ENCODE measurements at regions of chr2 and their contacts with region 1.

Region 1: DNA sequence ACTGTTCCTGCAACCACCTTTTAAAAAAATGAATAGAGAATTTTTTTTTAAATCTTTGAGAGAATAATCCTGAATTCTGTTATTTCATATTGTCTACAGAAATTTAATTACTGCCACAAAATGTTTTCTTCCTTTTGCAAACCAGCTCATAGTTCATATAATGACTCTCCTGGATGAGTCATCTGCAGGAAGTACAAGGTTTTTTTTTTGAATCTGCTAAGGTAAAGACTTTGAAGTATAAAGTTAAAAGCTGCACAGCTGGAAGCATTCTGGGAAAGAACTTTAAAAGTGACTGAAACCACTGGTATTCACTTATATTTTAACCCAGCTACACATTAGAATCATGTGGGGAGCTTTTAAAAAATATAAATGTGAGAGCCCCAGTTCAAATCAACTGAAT is 25.4 kb downstream of the SESTD1 start:
- DNase-seq: peak in 7 of 9 donors; percentile 0 to 32 (median 22)
- ATAC-seq: peak; percentile 48
- H3K4me3 ChIP-seq: no peak overlapping the region
- H3K4me3 Mint-ChIP-seq: peak overlapping the region in 3 of 10 donors; percentile 10 to 39 (median 18)
- H3K27ac ChIP-seq: no peak overlapping the region
- H3K27ac Mint-ChIP-seq: peak overlapping the region in 2 of 9 donors; percentile 35 to 73
- H3K4me1 ChIP-seq: peaks cover 0 to 4% of the 10 kb centered on the region in 2 donors
- H3K4me1 Mint-ChIP-seq: peaks cover 10 to 49% (median 21%) of the 10 kb centered on the region in 7 donors
- H3K27me3 ChIP-seq: no peaks in the 10 kb centered on the region
- H3K27me3 Mint-ChIP-seq: peaks cover 0 to 10% (median 5%) of the 10 kb centered on the region in 5 donors

Region 2: DNA sequence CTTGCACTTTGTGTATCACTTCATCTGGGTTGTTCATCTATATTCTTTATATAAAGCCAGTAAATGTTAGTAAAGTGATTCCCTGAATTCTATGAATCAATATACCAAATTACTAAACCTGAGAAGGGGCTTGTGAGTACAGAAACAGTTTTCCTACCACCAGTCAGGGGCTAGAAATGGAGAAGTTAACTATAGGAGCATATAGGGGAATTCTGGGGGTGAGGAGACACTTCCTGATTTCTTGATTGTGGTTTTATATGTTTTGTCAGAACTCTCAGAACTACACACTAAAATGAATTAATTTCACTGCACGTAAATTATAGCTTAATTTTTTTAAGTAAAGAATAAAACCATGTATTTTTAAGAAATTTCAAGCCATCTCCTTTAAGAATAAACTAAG is 68.3 kb before region 1 on chr2:
- CTCF ChIA-PET with region 1: no interaction called
- POLR2A ChIA-PET with region 1: no interaction called
- intact Hi-C with region 1: no loop called
- DNase-seq: no peak
- ATAC-seq: no peak
- H3K4me3 ChIP-seq: no peak overlapping the region
- H3K4me3 Mint-ChIP-seq: no peak overlapping the region
- H3K27ac ChIP-seq: no peak overlapping the region
- H3K27ac Mint-ChIP-seq: no peak overlapping the region
- H3K4me1 ChIP-seq: no peaks in the 10 kb centered on the region
- H3K4me1 Mint-ChIP-seq: no peaks in the 10 kb centered on the region
- H3K27me3 ChIP-seq: no peaks in the 10 kb centered on the region
- H3K27me3 Mint-ChIP-seq: no peaks in the 10 kb centered on the region

Region 3: GRCh38 chr2:179226203-179226960 is 12.8 kb before region 1 on chr2:
- CTCF ChIA-PET with region 1: no interaction called
- POLR2A ChIA-PET with region 1: no interaction called
- intact Hi-C with region 1: no loop called
- DNase-seq: no peak
- ATAC-seq: no peak
- H3K4me3 ChIP-seq: no peak overlapping the region
- H3K4me3 Mint-ChIP-seq: no peak overlapping the region
- H3K27ac ChIP-seq: no peak overlapping the region
- H3K27ac Mint-ChIP-seq: no peak overlapping the region
- H3K4me1 ChIP-seq: no peaks in the 10 kb centered on the region
- H3K4me1 Mint-ChIP-seq: no peaks in the 10 kb centered on the region
- H3K27me3 ChIP-seq: no peaks in the 10 kb centered on the region
- H3K27me3 Mint-ChIP-seq: peaks cover 0 to 2% (median 0%) of the 10 kb centered on the region in 5 donors

Region 4: GRCh38 chr2:179253226-179253625 is 14.0 kb after region 1 on chr2:
- CTCF ChIA-PET with region 1: interaction called, 3 read pairs
- POLR2A ChIA-PET with region 1: no interaction called
- intact Hi-C with region 1: loop called in 1 of 2 experiments (anchors 1 kb)
- DNase-seq: no peak
- ATAC-seq: no peak
- H3K4me3 ChIP-seq: no peak overlapping the region
- H3K4me3 Mint-ChIP-seq: peak overlapping the region in 2 of 10 donors; percentile 0 to 24
- H3K27ac ChIP-seq: no peak overlapping the region
- H3K27ac Mint-ChIP-seq: peak overlapping the region in 3 of 9 donors; percentile 51 to 78 (median 74)
- H3K4me1 ChIP-seq: no peaks in the 10 kb centered on the region
- H3K4me1 Mint-ChIP-seq: peaks cover 0 to 48% (median 10%) of the 10 kb centered on the region in 7 donors
- H3K27me3 ChIP-seq: no peaks in the 10 kb centered on the region
- H3K27me3 Mint-ChIP-seq: peaks cover 0 to 13% (median 0%) of the 10 kb centered on the region in 5 donors

Region 5: DNA sequence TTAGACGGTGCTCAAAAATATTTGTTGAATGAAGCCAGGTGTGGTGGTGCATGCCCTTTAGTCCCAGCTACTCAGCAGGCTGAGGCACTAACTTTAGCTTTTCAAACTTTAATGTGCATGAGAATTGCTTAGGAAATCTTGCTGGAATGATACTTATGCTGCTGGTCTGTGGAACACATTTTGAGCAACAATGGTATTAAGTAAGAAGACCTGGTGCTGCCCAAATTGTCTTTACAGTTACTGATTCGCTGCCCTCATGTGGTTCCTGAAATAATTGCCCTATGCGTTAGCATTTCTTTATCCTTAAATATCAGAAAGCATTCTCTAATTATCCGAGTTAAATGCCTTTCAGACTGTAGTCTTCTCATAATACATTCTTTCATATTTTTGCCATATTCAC is 101.5 kb after region 1 on chr2:
- CTCF ChIA-PET with region 1: no interaction called
- POLR2A ChIA-PET with region 1: no interaction called
- intact Hi-C with region 1: loop called in 1 of 2 experiments (anchors 5 kb)
- DNase-seq: no peak
- ATAC-seq: no peak
- H3K4me3 ChIP-seq: no peak overlapping the region
- H3K4me3 Mint-ChIP-seq: no peak overlapping the region
- H3K27ac ChIP-seq: no peak overlapping the region
- H3K27ac Mint-ChIP-seq: no peak overlapping the region
- H3K4me1 ChIP-seq: no peaks in the 10 kb centered on the region
- H3K4me1 Mint-ChIP-seq: no peaks in the 10 kb centered on the region
- H3K27me3 ChIP-seq: no peaks in the 10 kb centered on the region
- H3K27me3 Mint-ChIP-seq: peaks cover 0 to under 1% (median 0%) of the 10 kb centered on the region in 5 donors